Activated CD8-positive, alpha-beta T cell treated with anti-CD3 and anti-CD28 coated beads, Interleukin-2, amount 10 ng/mL, durations not matched to agents 7 days and 5 days (primary cell): ENCODE measurements at regions of chr12 and their contacts with region 1.

Region 1: DNA sequence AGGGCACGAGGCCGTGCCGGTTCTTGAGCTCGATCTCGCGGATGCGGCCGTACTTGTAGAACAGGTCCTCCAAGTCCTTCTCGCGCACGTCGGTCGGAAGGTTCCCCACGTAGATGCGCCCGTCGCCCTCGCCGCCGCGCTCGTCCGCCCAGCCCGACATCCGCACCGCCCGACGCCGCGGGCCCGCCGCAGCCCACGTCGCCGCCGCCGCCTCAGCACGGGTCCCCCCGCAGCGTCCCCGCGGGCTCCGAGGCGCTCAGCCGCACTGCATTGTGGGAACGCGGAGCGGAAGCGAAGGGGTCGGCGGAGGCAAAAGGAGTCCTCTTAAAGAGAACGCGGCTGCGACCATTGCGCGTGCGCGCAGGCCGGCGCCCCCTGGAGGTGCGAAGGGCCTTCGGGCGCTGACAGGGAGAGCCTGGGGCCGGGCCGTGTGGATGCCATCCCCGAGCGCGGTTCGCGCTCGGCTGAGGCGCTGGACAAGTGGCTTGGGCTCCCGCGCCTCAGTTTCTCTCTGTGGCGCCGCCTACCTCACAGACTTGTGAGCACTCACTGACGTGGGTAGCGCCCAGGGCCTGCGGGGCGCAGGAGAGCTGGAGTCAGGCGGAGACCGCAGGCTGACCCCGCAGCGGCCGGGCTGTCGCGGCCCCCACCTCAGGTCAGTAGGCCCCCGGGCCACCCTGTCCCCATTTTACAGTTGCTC is at the start of gene SRSF9:
- DNase-seq: peak; percentile 97
- ATAC-seq: peak; percentile 96
- H3K4me3 Mint-ChIP-seq: peak within 1 kb of the TSS; percentile 96
- H3K27ac Mint-ChIP-seq: peak within 1 kb of the TSS; percentile 87
- H3K4me1 Mint-ChIP-seq: peaks cover 40% of the 10 kb centered on the region
- H3K27me3 Mint-ChIP-seq: no peaks in the 10 kb centered on the region
- total RNA-seq, gene SRSF9: 199 to 219 TPM

Region 2: GRCh38 chr12:120437754-120438494 is 31.7 kb before region 1 on chr12 and contains the start of gene COX6A1:
- CTCF ChIA-PET with region 1: interaction called, 27 read pairs
- POLR2A ChIA-PET with region 1: interaction called, 4 read pairs
- DNase-seq: peak; percentile 99
- ATAC-seq: peak; percentile 98
- H3K4me3 Mint-ChIP-seq: peak within 1 kb of the TSS; percentile 83
- H3K27ac Mint-ChIP-seq: peak within 1 kb of the TSS; percentile 92
- H3K4me1 Mint-ChIP-seq: peaks cover 24% of the 10 kb centered on the region
- H3K27me3 Mint-ChIP-seq: no peaks in the 10 kb centered on the region
- total RNA-seq, gene COX6A1: 337 to 351 TPM

Region 3: GRCh38 chr12:120453977-120454376 is 15.6 kb before region 1 on chr12:
- CTCF ChIA-PET with region 1: interaction called, 18 read pairs
- POLR2A ChIA-PET with region 1: interaction called, 7 read pairs
- DNase-seq: peak; percentile 46
- ATAC-seq: peak; percentile 83
- H3K4me3 Mint-ChIP-seq: no peak overlapping the region
- H3K27ac Mint-ChIP-seq: no peak overlapping the region
- H3K4me1 Mint-ChIP-seq: peaks cover 4% of the 10 kb centered on the region
- H3K27me3 Mint-ChIP-seq: no peaks in the 10 kb centered on the region

Region 4: GRCh38 chr12:120508537-120508936 is 38.9 kb after region 1 on chr12:
- CTCF ChIA-PET with region 1: interaction called, 10 read pairs
- POLR2A ChIA-PET with region 1: no interaction called
- DNase-seq: no peak
- ATAC-seq: no peak
- H3K4me3 Mint-ChIP-seq: no peak overlapping the region
- H3K27ac Mint-ChIP-seq: no peak overlapping the region
- H3K4me1 Mint-ChIP-seq: no peaks in the 10 kb centered on the region
- H3K27me3 Mint-ChIP-seq: no peaks in the 10 kb centered on the region

Region 5: GRCh38 chr12:120580787-120581723 is 111.5 kb after region 1 on chr12 and contains the start of gene POP5:
- CTCF ChIA-PET with region 1: interaction called, 12 read pairs
- POLR2A ChIA-PET with region 1: no interaction called
- DNase-seq: peak; percentile 97
- ATAC-seq: peak; percentile 97
- H3K4me3 Mint-ChIP-seq: peak within 1 kb of the TSS; percentile 99
- H3K27ac Mint-ChIP-seq: peak within 1 kb of the TSS; percentile 96
- H3K4me1 Mint-ChIP-seq: peaks cover 41% of the 10 kb centered on the region
- H3K27me3 Mint-ChIP-seq: peaks cover 15% of the 10 kb centered on the region
- total RNA-seq, gene POP5: 63.3 to 64.0 TPM